Naive thymus-derived CD4-positive, alpha-beta T cell (primary cell): ENCODE measurements at regions of chr14 and their contacts with region 1.

Region 1: DNA sequence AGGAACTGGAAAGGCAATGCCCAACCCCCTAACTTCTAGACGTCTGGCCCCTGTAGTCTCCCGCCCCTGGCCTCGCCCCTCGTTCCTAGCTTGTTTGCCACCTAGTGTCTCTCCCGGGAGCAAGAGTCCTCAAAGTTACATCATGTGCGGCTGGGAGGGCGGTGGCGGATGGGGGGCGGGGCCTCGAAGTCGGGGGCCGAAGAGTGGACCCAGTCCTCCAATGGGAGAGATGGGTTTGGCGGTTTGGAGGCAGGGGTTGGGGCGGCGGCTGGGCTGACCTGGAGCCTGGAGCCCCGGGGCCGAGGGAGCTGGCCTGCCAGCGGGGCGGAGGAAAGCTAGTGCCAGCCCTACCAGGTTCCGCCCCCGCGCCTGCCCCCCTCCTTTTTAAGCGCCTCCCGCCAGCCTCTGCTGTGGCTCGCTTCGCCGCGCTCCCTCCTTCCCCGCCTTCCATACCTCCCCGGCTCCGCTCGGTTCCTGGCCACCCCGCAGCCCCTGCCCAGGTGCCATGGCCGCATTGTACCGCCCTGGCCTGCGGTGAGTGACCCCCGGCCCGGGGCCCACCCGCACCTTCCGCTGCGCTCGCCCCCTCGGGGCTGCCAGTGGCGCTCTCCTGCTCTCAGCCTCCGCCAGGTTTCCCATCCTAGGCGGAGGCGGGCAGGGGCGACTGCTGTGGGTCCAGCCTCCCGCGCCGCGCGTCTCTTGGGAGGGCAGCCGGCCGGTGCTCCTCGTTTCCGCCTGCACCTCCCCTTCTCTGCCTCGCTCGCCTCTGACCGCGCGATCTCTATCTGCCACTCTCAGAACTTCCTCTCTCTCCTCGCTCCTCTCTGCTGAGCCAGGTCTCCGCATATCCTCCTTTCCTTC is at the start of gene PCK2:
- DNase-seq: peak; percentile 44 to 80 (median 56)
- ATAC-seq: peak; percentile 81
- H3K4me3 ChIP-seq: peak within 1 kb of the TSS; percentile 91
- H3K4me3 Mint-ChIP-seq: peak within 1 kb of the TSS; percentile 91 to 100 (median 98)
- H3K27ac ChIP-seq: peak within 1 kb of the TSS; percentile 92
- H3K27ac Mint-ChIP-seq: peak within 1 kb of the TSS; percentile 90 to 97 (median 96)
- H3K4me1 ChIP-seq: peaks cover 6 to 16% of the 10 kb centered on the region in 2 donors
- H3K4me1 Mint-ChIP-seq: peaks cover 28 to 47% (median 41%) of the 10 kb centered on the region in 7 donors
- H3K27me3 ChIP-seq: no peaks in the 10 kb centered on the region
- H3K27me3 Mint-ChIP-seq: no peaks in the 10 kb centered on the region
- total RNA-seq, gene PCK2: 9.1 to 56.2 (median 14.4) TPM

Region 2: DNA sequence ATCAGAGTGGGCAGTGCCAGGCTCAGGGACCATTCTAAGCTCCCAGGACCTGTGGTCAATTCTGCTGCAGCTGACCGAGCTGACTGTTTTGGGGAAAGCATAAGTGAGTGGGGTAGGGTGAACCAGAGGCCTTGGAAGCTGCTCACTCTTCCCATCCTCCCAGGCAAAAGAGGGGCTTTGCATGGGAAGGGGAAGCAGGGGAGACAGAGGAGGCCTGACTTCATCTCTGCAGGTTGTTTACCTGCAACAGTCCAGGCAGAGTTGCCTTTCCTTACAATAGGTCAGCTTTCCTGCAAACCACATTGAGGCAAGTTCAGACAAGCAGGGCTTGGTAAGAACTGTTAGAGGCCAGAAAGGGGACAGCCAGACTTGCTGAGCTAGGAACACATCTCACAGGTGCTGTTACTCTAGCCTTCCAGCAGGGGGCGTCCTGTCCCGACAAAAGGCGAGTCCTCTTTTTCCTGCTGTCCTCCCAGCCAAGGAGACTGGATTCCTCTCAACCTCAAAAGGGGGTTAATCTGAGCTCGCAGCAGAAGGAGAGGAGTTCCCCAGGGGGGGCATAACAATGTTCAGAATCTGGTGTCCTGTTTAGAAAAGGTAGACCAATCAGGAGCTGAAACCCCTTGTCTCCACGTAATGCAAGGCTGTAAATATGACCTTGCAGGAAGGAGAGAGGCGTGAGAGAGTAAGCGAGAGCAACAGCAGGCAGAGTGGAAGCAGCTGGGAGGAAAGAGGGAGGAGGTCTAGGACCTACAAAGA is 462.2 kb before region 1 on chr14:
- CTCF ChIA-PET with region 1: no interaction called
- POLR2A ChIA-PET with region 1: no interaction called
- intact Hi-C with region 1: loop called in 1 of 2 experiments (anchors 5 kb)
- DNase-seq: peak; percentile 53 to 89 (median 76)
- ATAC-seq: peak; percentile 88
- H3K4me3 ChIP-seq: peak overlapping the region; percentile 16
- H3K4me3 Mint-ChIP-seq: peak overlapping the region; percentile 9 to 89 (median 77)
- H3K27ac ChIP-seq: peak overlapping the region; percentile 18
- H3K27ac Mint-ChIP-seq: peak overlapping the region in 8 of 9 donors; percentile 17 to 84 (median 60)
- H3K4me1 ChIP-seq: no peaks in the 10 kb centered on the region
- H3K4me1 Mint-ChIP-seq: peaks cover 5 to 18% (median 13%) of the 10 kb centered on the region in 7 donors
- H3K27me3 ChIP-seq: no peaks in the 10 kb centered on the region
- H3K27me3 Mint-ChIP-seq: peaks cover 0 to 2% (median 0%) of the 10 kb centered on the region in 5 donors

Region 3: GRCh38 chr14:24013654-24014514 is 80.2 kb before region 1 on chr14:
- CTCF ChIA-PET with region 1: interaction called, 6 read pairs
- POLR2A ChIA-PET with region 1: no interaction called
- intact Hi-C with region 1: loop called in 1 of 2 experiments (anchors 1 kb)
- DNase-seq: peak in 8 of 9 donors; percentile 17 to 76 (median 67)
- ATAC-seq: peak; percentile 94
- H3K4me3 ChIP-seq: no peak overlapping the region
- H3K4me3 Mint-ChIP-seq: no peak overlapping the region
- H3K27ac ChIP-seq: no peak overlapping the region
- H3K27ac Mint-ChIP-seq: no peak overlapping the region
- H3K4me1 ChIP-seq: peaks cover 0 to 6% of the 10 kb centered on the region in 2 donors
- H3K4me1 Mint-ChIP-seq: peaks cover 8 to 28% (median 25%) of the 10 kb centered on the region in 7 donors
- H3K27me3 ChIP-seq: no peaks in the 10 kb centered on the region
- H3K27me3 Mint-ChIP-seq: peaks cover 0 to 15% (median 0%) of the 10 kb centered on the region in 5 donors

Region 4: DNA sequence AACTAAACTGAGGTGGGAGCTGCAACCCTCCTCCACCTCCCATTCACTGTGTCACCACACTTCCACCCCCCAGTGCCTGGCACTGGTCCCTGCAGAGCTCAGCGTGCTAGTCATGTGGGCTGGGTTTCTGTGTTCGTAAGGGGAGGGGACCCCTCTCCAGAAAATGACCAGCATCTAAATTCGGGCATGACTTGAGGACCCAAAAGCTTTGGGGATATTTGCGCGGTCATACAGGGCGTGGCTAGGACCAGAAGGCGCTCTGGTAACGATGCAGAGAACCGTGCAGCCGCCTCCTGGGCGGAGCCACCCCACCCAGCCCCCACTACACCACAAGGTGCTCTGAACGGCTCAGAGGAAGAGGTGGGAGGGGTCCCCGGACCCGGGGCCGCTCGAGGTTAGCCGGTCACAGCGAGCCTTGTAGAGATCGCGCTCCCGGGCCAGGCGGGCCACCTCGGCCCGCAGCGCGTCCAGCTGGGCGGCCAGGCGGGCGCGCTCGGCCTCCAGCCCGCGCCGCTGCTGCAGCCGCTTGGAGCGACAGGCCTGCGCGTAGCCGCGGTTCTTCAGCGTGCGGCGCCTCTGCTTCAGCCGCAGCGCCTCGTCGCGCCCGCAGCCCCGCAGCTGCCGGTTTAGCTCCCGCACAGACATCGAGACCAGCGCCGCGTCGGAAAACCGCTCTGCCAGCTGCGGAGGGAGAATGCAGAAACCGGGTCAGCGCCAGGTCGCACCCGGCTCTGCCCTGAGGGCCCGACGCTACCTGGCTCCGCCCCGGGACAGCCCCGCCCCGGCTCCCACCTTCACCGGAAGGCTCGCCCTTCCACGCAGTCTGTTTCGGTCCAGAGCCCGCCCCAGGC is 13.0 kb before region 1 on chr14:
- CTCF ChIA-PET with region 1: interaction called, 49 read pairs
- POLR2A ChIA-PET with region 1: interaction called, 80 read pairs
- intact Hi-C with region 1: loop called (anchors 1 kb)
- DNase-seq: peak; percentile 46 to 75 (median 72)
- ATAC-seq: peak; percentile 92
- H3K4me3 ChIP-seq: peak overlapping the region; percentile 82
- H3K4me3 Mint-ChIP-seq: peak overlapping the region; percentile 80 to 90 (median 86)
- H3K27ac ChIP-seq: peak overlapping the region; percentile 75
- H3K27ac Mint-ChIP-seq: peak overlapping the region; percentile 32 to 92 (median 85)
- H3K4me1 ChIP-seq: peaks cover 7 to 14% of the 10 kb centered on the region in 2 donors
- H3K4me1 Mint-ChIP-seq: peaks cover 16 to 20% (median 18%) of the 10 kb centered on the region in 7 donors
- H3K27me3 ChIP-seq: no peaks in the 10 kb centered on the region
- H3K27me3 Mint-ChIP-seq: peaks cover 0 to 20% (median 0%) of the 10 kb centered on the region in 5 donors

Region 5: DNA sequence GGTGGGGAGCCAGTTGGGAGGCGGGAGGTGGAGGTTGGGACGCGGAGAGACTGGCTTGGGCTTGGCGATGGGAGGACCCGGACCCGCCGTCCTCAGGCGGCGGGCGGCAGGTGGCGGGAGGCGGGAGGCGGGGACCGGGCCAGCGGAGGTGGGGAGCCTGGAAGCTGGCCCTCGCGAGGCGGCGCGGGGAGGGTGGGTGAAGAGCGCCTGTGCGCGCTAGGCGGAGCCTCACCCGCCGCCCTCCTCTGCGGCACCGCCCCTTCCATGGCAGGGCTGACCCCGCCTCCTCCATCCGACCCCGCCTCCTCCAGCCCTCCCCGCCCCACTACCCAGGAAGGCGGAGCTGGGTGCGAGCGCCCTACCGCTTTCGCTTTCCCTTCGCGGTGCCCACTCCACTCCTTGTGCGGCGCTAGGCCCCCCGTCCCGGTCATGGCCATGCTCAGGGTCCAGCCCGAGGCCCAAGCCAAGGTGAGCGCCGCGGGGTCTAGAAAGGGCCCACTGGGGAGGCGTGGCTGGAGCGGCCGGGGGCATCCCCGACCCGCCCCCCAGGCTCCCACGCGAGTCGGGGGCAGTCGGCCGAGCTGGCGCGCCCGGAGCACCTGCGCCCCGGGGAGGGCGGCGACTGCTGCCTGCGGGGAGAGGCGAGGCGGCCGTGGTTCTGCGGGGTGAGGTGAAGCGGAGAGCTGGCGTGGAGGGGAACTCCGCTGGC is 41.9 kb after region 1 on chr14 and contains the start of gene PSME1:
- CTCF ChIA-PET with region 1: no interaction called
- POLR2A ChIA-PET with region 1: interaction called, 6 read pairs
- intact Hi-C with region 1: loop called (anchors 1 kb)
- DNase-seq: peak; percentile 88 to 97 (median 92)
- ATAC-seq: peak; percentile 99
- H3K4me3 ChIP-seq: peak within 1 kb of the TSS; percentile 83
- H3K4me3 Mint-ChIP-seq: peak within 1 kb of the TSS; percentile 88 to 95 (median 92)
- H3K27ac ChIP-seq: peak within 1 kb of the TSS; percentile 97
- H3K27ac Mint-ChIP-seq: peak within 1 kb of the TSS; percentile 86 to 98 (median 93)
- H3K4me1 ChIP-seq: peaks cover 16 to 37% of the 10 kb centered on the region in 2 donors
- H3K4me1 Mint-ChIP-seq: peaks cover 48 to 71% (median 64%) of the 10 kb centered on the region in 7 donors
- H3K27me3 ChIP-seq: no peaks in the 10 kb centered on the region
- H3K27me3 Mint-ChIP-seq: no peaks in the 10 kb centered on the region
- total RNA-seq, gene PSME1: 189 to 583 (median 202) TPM

Region 6: DNA sequence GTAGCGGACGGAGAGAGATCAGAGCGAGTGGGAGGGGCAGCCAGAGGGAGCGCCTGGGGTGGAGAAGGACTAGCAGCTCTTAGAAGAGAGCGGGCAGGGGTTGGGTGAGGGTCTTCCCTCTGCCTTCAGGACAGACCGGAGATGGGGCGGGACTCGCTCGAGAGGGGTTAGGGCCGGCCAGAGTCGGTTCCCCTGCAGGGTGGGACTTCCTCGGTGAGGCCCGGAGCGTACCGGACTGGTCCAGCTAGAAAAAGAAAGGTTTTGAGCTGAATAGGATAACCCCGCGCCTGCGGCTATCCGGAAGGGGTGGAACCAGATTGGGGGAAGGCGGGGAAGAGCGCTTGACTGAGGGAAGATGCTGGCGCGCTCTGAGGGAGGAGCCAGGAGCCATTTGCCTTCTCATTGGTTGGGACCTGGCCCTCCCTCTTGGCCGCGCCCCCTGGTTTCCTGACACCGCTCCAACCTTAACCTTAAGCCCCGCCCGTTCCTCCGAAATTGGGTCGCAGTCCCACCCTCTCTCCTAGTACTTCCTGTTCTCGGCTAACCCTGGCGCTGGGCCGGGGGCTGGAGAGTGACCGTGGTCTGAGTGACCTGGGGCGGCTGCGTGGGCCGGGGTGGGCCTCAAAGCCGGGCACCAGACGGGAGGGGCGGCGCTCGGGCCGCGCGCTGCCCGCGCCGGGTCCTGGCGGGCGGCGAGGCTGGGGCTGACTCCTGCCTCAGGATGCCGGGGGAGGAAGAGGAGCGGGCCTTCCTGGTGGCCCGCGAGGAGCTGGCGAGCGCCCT is 53.0 kb after region 1 on chr14 and contains the start of gene RNF31:
- CTCF ChIA-PET with region 1: interaction called, 3 read pairs
- POLR2A ChIA-PET with region 1: interaction called, 5 read pairs
- intact Hi-C with region 1: loop called in 1 of 2 experiments (anchors 1 kb)
- DNase-seq: peak; percentile 88 to 98 (median 96)
- ATAC-seq: peak; percentile 95
- H3K4me3 ChIP-seq: peak within 1 kb of the TSS; percentile 98
- H3K4me3 Mint-ChIP-seq: peak within 1 kb of the TSS; percentile 91 to 100 (median 98)
- H3K27ac ChIP-seq: peak within 1 kb of the TSS; percentile 88
- H3K27ac Mint-ChIP-seq: peak within 1 kb of the TSS; percentile 94 to 98 (median 96)
- H3K4me1 ChIP-seq: peaks cover 35 to 47% of the 10 kb centered on the region in 2 donors
- H3K4me1 Mint-ChIP-seq: peaks cover 39 to 73% (median 61%) of the 10 kb centered on the region in 7 donors
- H3K27me3 ChIP-seq: no peaks in the 10 kb centered on the region
- H3K27me3 Mint-ChIP-seq: no peaks in the 10 kb centered on the region
- total RNA-seq, gene RNF31: 64.0 to 151 (median 95.4) TPM

Region 7: GRCh38 chr14:24224618-24225071 is 130.5 kb after region 1 on chr14:
- CTCF ChIA-PET with region 1: no interaction called
- POLR2A ChIA-PET with region 1: no interaction called
- intact Hi-C with region 1: no loop called
- DNase-seq: no peak
- ATAC-seq: no peak
- H3K4me3 ChIP-seq: no peak overlapping the region
- H3K4me3 Mint-ChIP-seq: no peak overlapping the region
- H3K27ac ChIP-seq: no peak overlapping the region
- H3K27ac Mint-ChIP-seq: peak overlapping the region in 3 of 9 donors; percentile 33 to 74 (median 66)
- H3K4me1 ChIP-seq: peaks cover 0 to 5% of the 10 kb centered on the region in 2 donors
- H3K4me1 Mint-ChIP-seq: peaks cover 13 to 40% (median 30%) of the 10 kb centered on the region in 7 donors
- H3K27me3 ChIP-seq: no peaks in the 10 kb centered on the region
- H3K27me3 Mint-ChIP-seq: no peaks in the 10 kb centered on the region

Region 8: DNA sequence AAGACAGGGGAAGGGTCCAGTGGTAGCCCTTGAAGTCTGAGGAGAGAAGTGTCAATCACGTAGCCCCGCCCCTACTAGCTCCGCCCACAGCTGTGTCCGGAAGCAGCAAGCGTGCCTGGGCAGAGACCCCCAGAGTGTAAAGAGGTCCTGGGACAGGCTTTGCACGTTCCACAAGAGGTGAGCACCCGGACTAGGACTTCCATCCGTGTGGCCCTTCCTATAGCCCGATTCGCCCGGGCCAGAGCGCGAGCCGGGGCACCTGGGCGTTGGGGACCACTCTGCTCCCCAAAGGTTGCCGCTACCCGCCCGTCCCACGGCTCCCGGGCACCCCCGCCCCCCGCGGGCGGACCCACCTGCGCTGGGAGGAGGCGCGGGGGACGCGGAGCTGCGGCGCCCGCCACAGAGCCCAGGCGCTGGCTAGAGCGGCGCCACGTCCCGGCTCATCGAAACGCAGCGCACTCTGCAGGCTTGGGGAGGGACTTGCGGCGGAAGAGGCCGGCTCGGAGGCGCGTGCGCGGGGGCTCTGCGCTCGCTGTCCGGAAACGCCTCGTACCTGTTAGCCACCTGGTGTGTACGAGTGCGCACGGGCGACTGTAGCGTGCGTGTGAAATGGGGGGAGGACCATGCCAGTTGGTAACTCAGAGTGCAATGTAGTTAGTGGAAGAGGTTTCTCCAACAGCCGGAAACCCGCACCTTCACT is 177.2 kb after region 1 on chr14 and contains the start of gene RABGGTA:
- CTCF ChIA-PET with region 1: no interaction called
- POLR2A ChIA-PET with region 1: no interaction called
- intact Hi-C with region 1: no loop called
- DNase-seq: peak; percentile 87 to 97 (median 96)
- ATAC-seq: peak; percentile 91
- H3K4me3 ChIP-seq: peak within 1 kb of the TSS; percentile 80
- H3K4me3 Mint-ChIP-seq: peak within 1 kb of the TSS; percentile 79 to 95 (median 92)
- H3K27ac ChIP-seq: peak within 1 kb of the TSS; percentile 98
- H3K27ac Mint-ChIP-seq: peak within 1 kb of the TSS; percentile 93 to 100 (median 98)
- H3K4me1 ChIP-seq: peaks cover 17 to 23% of the 10 kb centered on the region in 2 donors
- H3K4me1 Mint-ChIP-seq: peaks cover 30 to 52% (median 46%) of the 10 kb centered on the region in 7 donors
- H3K27me3 ChIP-seq: no peaks in the 10 kb centered on the region
- H3K27me3 Mint-ChIP-seq: no peaks in the 10 kb centered on the region
- total RNA-seq, gene RABGGTA: 49.7 to 76.5 (median 55.5) TPM